ENCODE measurements at regions of chr17 and their contacts with region 1.

Region 1: DNA sequence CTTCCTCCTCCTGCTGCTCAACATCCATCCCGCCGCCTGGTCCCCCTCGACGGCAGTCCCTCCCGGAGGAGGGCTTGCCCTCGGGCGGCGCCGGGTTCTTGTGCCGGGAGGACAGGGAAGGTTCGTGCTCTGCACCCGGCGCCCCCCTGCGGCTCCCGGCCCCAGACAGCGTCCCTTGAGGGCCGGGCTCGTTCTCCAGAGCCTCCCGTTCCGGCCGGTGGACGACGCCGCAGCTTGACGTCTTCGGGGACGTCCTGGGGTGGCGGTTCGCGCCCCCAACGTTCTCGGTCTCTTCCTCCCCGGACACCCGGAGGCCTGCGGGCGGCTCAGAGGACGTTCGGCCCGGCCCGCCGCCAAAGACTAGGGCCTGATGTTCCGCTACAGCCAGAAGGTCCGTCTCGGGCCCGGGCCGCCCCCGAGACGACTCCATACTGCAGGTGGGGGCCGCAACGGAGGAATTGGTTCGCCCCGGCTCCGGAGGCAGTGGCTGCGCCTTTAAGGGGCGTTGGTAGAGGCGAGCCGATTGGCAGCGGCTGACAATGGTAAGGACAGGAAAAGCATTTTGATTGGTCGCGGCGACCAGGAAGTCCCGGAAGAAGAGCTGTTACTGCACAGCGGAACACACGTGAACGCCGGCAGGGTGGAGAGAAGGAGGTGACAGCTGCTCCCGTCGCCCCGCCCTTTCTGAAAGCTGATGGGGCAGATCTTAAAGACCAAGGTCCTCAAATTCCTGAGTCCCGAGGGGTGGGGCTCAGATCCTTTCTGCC is at the start of gene BORCS6:
- DNase-seq: peak; percentile 99
- H3K4me3 Mint-ChIP-seq: no peak within 1 kb of the TSS
- H3K27ac Mint-ChIP-seq: peak within 1 kb of the TSS; percentile 59
- H3K4me1 Mint-ChIP-seq: no peaks in the 10 kb centered on the region
- H3K27me3 Mint-ChIP-seq: no peaks in the 10 kb centered on the region
- CTCF ChIP-seq: no peak
- total RNA-seq, gene BORCS6: 3.9 and 4.4 TPM in 2 replicates

Region 2: DNA sequence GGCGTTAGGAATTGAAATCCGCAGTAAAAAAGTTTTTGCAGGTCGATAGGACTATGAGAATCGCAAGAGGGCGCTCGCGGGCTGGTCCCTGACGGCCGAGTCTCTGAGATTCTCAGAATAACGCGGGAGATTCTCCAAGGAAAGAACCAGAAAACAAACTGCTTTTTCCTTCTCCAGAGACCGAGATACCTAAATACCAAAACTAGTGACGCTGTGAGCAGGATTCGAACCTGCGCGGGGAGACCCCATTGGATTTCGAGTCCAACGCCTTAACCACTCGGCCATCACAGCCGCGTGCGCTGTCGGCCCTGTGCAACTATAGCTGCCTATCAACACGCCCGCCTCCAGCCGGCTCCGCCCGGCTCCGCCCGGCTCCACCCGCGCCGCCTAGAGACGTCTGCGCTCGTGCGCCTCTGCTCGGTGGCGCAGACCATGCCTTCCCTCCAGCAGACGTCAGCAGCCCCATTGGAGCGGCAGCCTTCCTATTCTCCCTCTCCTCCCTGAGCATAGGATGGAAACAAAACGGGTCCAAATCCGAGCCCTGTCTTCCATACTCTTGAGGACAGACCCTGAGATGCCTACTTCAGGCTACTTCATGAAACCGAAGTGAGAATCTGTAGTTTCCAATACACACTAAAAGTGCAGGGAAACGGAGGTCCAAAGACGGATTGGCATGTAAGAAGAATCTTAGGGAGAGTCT is 51.1 kb before region 1 on chr17:
- CTCF ChIA-PET with region 1: interaction called, 4 read pairs
- POLR2A ChIA-PET with region 1: interaction called, 11 read pairs
- intact Hi-C with region 1: no loop called
- DNase-seq: peak; percentile 95
- H3K4me3 Mint-ChIP-seq: no peak overlapping the region
- H3K27ac Mint-ChIP-seq: no peak overlapping the region
- H3K4me1 Mint-ChIP-seq: peaks cover 11% of the 10 kb centered on the region
- H3K27me3 Mint-ChIP-seq: no peaks in the 10 kb centered on the region
- CTCF ChIP-seq: peak; percentile 71

Region 3: GRCh38 chr17:8173056-8173870 is 16.6 kb before region 1 on chr17:
- CTCF ChIA-PET with region 1: interaction called, 5 read pairs
- POLR2A ChIA-PET with region 1: interaction called, 119 read pairs
- intact Hi-C with region 1: loop called (anchors 1 kb)
- DNase-seq: peak; percentile 99
- H3K4me3 Mint-ChIP-seq: peak overlapping the region; percentile 91
- H3K27ac Mint-ChIP-seq: peak overlapping the region; percentile 100
- H3K4me1 Mint-ChIP-seq: peaks cover 27% of the 10 kb centered on the region
- H3K27me3 Mint-ChIP-seq: no peaks in the 10 kb centered on the region
- CTCF ChIP-seq: no peak

Region 4: DNA sequence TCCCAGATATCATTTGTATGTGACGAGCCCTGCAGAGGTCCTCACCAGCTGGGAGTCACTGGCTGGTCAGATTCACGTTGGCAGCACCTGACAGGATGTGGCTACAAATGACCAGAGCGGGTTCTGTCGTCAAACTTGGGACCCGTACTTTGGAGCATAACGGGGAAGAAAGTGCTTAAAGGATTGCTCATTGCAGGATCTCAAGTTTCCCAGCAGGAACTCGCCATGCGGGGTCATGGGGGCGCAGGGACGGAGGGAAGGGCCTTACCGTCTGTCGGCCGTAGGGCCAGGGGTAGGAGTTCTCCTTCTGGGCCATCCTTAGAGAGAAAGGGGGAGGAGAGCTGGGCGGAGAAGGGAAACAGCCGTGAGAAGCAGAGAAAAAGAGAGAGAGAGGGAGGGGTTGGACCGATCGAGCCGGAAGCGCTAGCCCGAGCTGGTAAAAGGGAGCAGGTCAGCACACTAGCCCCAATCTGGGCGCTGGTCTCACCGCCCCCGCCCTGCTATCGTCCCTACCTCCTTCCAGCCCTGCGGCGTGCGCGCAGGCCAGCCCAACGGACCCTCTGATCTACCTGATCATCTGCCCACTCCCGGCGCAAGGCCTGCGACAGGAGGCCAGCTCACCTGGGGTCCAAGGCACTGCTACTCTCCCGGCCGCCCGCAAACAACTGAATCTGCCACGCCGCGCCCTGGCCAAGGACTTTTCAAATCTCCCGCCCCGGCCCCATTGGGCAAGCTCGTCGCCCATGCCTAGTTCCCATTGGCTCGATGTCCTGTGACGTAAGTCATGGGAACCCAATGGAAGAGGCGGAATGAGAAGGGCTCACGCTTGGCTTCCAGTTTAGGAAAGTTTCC is 20.2 kb after region 1 on chr17 and contains the start of gene AURKB:
- CTCF ChIA-PET with region 1: interaction called, 6 read pairs
- POLR2A ChIA-PET with region 1: interaction called, 30 read pairs
- intact Hi-C with region 1: no loop called
- DNase-seq: peak; percentile 99
- H3K4me3 Mint-ChIP-seq: peak within 1 kb of the TSS; percentile 91
- H3K27ac Mint-ChIP-seq: peak within 1 kb of the TSS; percentile 91
- H3K4me1 Mint-ChIP-seq: peaks cover 6% of the 10 kb centered on the region
- H3K27me3 Mint-ChIP-seq: no peaks in the 10 kb centered on the region
- CTCF ChIP-seq: no peak
- total RNA-seq, gene AURKB: 11.7 and 33.6 TPM in 2 replicates

Region 5: GRCh38 chr17:8294814-8295316 is 105.0 kb after region 1 on chr17:
- CTCF ChIA-PET with region 1: interaction called, 5 read pairs
- POLR2A ChIA-PET with region 1: interaction called, 18 read pairs
- intact Hi-C with region 1: loop called (anchors 1 kb)
- DNase-seq: no peak
- H3K4me3 Mint-ChIP-seq: peak overlapping the region; percentile 92
- H3K27ac Mint-ChIP-seq: peak overlapping the region; percentile 91
- H3K4me1 Mint-ChIP-seq: peaks cover 21% of the 10 kb centered on the region
- H3K27me3 Mint-ChIP-seq: no peaks in the 10 kb centered on the region
- CTCF ChIP-seq: no peak

Measured in MCF 10A (cell line).